Ovary (tissue), 10 donors: ENCODE measurements at regions of chr19 and their contacts with region 1.

Region 1: DNA sequence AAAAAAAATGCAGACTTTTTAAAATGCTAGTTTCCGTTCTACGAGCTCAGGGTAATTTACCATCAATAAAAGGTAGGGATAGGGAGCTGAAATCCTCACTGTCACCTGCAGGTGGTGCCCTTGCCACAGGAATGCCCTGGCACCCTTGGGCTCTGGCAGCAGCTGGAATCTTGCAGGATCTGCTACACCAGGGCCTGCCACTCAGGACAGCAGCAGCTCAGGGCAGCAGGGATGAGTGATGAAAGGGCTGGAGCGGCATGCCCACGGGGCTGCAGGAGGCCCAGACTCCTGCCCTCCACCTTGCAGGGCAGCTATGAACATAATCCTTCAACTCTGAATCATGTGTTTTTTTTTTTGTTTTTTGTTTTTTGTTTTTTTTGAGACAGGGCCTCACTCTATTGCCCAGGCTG is 54.0 kb downstream of the GNG7 start:
- DNase-seq: peak; percentile 67 to 84 (median 73)
- H3K4me3 ChIP-seq: no peak overlapping the region
- H3K27ac ChIP-seq: no peak overlapping the region
- H3K4me1 ChIP-seq: peaks cover 14% of the 10 kb centered on the region
- H3K27me3 ChIP-seq: no peaks in the 10 kb centered on the region
- CTCF ChIP-seq: peak; percentile 24 to 85 (median 76)
- EP300 ChIP-seq: no peak
- POLR2A ChIP-seq: peak; percentile 10

Region 2: GRCh38 chr19:2739602-2740313 is 91.2 kb after region 1 on chr19 and contains the start of gene SLC39A3:
- intact Hi-C with region 1: loop called in 1 of 4 experiments (anchors 5 kb)
- DNase-seq: peak; percentile 98 to 100 (median 99)
- H3K4me3 ChIP-seq: peak within 1 kb of the TSS; percentile 88
- H3K27ac ChIP-seq: peak within 1 kb of the TSS in 1 of 2 donors; percentile 36
- H3K4me1 ChIP-seq: peaks cover 5% of the 10 kb centered on the region
- H3K27me3 ChIP-seq: no peaks in the 10 kb centered on the region
- CTCF ChIP-seq: peak in 2 of 3 donors; percentile 31 to 73
- EP300 ChIP-seq: no peak
- POLR2A ChIP-seq: no peak
- total RNA-seq, gene SLC39A3: 12.2 to 40.2 (median 18.3) TPM

Region 3: GRCh38 chr19:2750808-2751443 is 102.4 kb after region 1 on chr19:
- intact Hi-C with region 1: loop called in 3 of 4 experiments (anchors 5 kb)
- DNase-seq: no peak
- H3K4me3 ChIP-seq: no peak overlapping the region
- H3K27ac ChIP-seq: no peak overlapping the region
- H3K4me1 ChIP-seq: peaks cover 3% of the 10 kb centered on the region
- H3K27me3 ChIP-seq: no peaks in the 10 kb centered on the region
- CTCF ChIP-seq: no peak
- EP300 ChIP-seq: no peak
- POLR2A ChIP-seq: no peak

Region 4: GRCh38 chr19:2867025-2867991 is 218.8 kb after region 1 on chr19 and contains the start of gene ZNF556:
- intact Hi-C with region 1: loop called in 2 of 4 experiments (anchors 5 to 10 kb)
- DNase-seq: peak; percentile 89 to 95 (median 92)
- H3K4me3 ChIP-seq: peak within 1 kb of the TSS; percentile 43
- H3K27ac ChIP-seq: peak within 1 kb of the TSS in 1 of 2 donors; percentile 51
- H3K4me1 ChIP-seq: peaks cover 14% of the 10 kb centered on the region
- H3K27me3 ChIP-seq: no peaks in the 10 kb centered on the region
- CTCF ChIP-seq: no peak
- EP300 ChIP-seq: no peak
- POLR2A ChIP-seq: no peak
- total RNA-seq, gene ZNF556: 2.8 to 9.0 (median 6.9) TPM